ENCODE measurements at regions of chr1 and their contacts with region 1.

Region 1: DNA sequence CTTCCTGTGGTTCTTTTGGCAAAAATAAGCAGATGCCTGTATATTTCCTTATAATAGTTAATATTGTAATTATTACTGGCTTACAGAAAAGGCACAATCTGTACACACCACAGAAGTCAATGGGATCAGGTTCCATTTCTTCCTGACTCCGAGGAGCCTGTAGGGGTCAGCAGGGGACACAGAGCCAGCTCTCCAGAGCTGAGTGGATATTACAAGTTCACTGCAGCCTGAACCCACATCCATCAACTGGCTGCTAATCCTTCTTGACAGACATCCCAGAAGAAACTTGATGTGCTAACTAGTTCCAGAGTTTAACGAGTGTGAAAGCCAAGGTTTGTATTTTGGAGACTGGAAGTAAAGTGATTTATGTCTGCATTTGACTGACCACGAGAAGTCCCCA is 203.8 kb downstream of the LMX1A start:
- DNase-seq: peak; percentile 6
- ATAC-seq: peak; percentile 96
- H3K4me3 ChIP-seq: no peak overlapping the region
- H3K27ac ChIP-seq: no peak overlapping the region
- H3K4me1 ChIP-seq: peaks cover 5% of the 10 kb centered on the region
- H3K27me3 ChIP-seq: no peaks in the 10 kb centered on the region
- CTCF ChIP-seq: peak; percentile 72
- EP300 ChIP-seq: no peak
- POLR2A ChIP-seq: no peak
- RAD21 ChIP-seq: no peak

Region 2: GRCh38 chr1:165129568-165130164 is 23.1 kb before region 1 on chr1:
- CTCF ChIA-PET with region 1: no interaction called
- POLR2A ChIA-PET with region 1: no interaction called
- in situ Hi-C with region 1: no loop called
- intact Hi-C with region 1: no loop called
- DNase-seq: peak; percentile 83
- ATAC-seq: peak; percentile 100
- H3K4me3 ChIP-seq: no peak overlapping the region
- H3K27ac ChIP-seq: no peak overlapping the region
- H3K4me1 ChIP-seq: peaks cover 11% of the 10 kb centered on the region
- H3K27me3 ChIP-seq: no peaks in the 10 kb centered on the region
- CTCF ChIP-seq: peak; percentile 95
- EP300 ChIP-seq: no peak
- POLR2A ChIP-seq: no peak
- RAD21 ChIP-seq: no peak

Region 3: GRCh38 chr1:165288350-165289148 is 135.8 kb after region 1 on chr1:
- CTCF ChIA-PET with region 1: no interaction called
- POLR2A ChIA-PET with region 1: no interaction called
- in situ Hi-C with region 1: no loop called
- intact Hi-C with region 1: loop called (anchors 5 kb)
- DNase-seq: no peak
- ATAC-seq: no peak
- H3K4me3 ChIP-seq: no peak overlapping the region
- H3K27ac ChIP-seq: no peak overlapping the region
- H3K4me1 ChIP-seq: 0 out of 2 replicates have a peak, but pooled peaks cover 9% of the 10 kb centered on the region
- H3K27me3 ChIP-seq: no peaks in the 10 kb centered on the region
- CTCF ChIP-seq: no peak
- EP300 ChIP-seq: no peak
- POLR2A ChIP-seq: no peak
- RAD21 ChIP-seq: no peak